ENCODE measurements at regions of chr16 and their contacts with region 1.

Region 1: DNA sequence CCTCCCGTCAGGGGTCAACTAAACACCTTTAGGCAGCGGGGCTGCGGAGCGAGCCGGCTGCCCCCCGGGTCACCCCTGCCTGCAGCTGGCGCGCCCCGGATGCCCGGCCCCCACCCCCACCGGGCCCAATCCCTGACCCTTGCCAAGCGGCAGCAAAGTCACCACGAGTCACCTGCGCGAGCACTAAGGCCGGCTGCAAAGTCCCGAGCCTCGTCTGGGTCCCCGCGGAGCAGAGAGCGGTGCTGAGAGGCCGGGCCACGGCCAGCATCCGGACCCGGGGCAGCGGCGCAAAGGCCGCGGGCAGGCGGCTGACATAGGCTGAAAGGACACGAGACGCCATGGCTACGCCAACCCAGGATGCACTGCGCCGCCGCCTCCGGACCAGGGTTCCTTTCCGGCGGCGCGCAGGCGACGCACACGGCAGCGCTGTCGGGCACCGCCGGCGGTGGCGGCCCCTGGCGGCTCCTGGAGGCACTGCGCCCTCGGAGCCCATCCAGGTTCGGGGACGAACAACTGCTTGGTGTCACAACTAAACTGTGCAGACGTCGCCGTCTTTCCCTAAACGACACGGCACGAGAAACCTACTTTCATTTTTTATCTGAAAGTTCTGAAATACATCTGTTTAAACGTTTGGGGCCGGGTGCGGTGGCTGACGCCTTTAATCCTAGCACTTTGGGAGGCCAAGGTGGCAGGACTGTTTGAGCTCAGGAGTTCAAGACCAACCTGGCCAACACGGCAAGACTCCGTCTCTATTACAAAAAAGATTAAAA is at the start of gene NDUFAB1:
- DNase-seq: peak; percentile 94 to 96
- ATAC-seq: peak; percentile 96 to 99 (median 96)
- H3K4me3 ChIP-seq: peak within 1 kb of the TSS; percentile 90
- H3K27ac ChIP-seq: peak within 1 kb of the TSS; percentile 82
- H3K4me1 ChIP-seq: peaks cover 19% of the 10 kb centered on the region
- H3K27me3 ChIP-seq: no peaks in the 10 kb centered on the region
- CTCF ChIP-seq: peak; percentile 100
- total RNA-seq, gene NDUFAB1: 175 to 241 (median 210) TPM

Region 2: GRCh38 chr16:23482778-23483177 is 113.4 kb before region 1 on chr16:
- intact Hi-C with region 1: no loop called
- DNase-seq: no peak
- ATAC-seq: no peak
- H3K4me3 ChIP-seq: no peak overlapping the region
- H3K27ac ChIP-seq: no peak overlapping the region
- H3K4me1 ChIP-seq: no peaks in the 10 kb centered on the region
- H3K27me3 ChIP-seq: no peaks in the 10 kb centered on the region
- CTCF ChIP-seq: no peak

Region 3: GRCh38 chr16:23640931-23641765 is 45.0 kb after region 1 on chr16 and contains the starts of genes DCTN5 and PALB2:
- intact Hi-C with region 1: loop called in 1 of 2 experiments (anchors 2 kb)
- DNase-seq: peak; percentile 94 to 97
- ATAC-seq: peak; percentile 99 to 100 (median 100)
- H3K4me3 ChIP-seq: peak within 1 kb of the TSS; percentile 94
- H3K27ac ChIP-seq: peak within 1 kb of the TSS; percentile 91
- H3K4me1 ChIP-seq: peaks cover 20% of the 10 kb centered on the region
- H3K27me3 ChIP-seq: no peaks in the 10 kb centered on the region
- CTCF ChIP-seq: no peak
- total RNA-seq, gene DCTN5: 27.5 to 43.8 (median 31.6) TPM
- total RNA-seq, gene PALB2: 4.3 to 6.6 (median 5.4) TPM

Region 4: DNA sequence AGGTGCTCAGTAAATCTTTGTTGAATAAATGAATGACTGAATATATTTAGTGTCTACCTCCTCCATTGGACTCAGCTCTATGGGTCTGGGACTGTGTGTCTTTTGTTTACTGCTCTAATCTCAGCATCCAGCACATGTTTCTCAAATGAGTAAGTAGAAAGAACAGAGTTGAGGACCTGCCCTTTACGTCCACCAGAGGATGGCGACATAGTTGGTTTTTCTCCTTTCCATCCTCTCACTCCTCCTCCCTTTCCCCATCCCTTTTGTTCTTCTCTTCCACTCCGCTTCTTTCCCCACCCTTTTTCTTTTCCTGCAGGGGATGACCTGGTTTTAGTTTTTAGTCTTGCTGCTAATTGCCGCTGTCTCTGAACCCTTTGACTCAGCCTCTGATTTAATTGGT is 146.6 kb after region 1 on chr16:
- intact Hi-C with region 1: no loop called
- DNase-seq: no peak
- ATAC-seq: no peak
- H3K4me3 ChIP-seq: no peak overlapping the region
- H3K27ac ChIP-seq: no peak overlapping the region
- H3K4me1 ChIP-seq: no peaks in the 10 kb centered on the region
- H3K27me3 ChIP-seq: peaks cover 0 to 1% (median 0%) of the 10 kb centered on the region in 3 donors
- CTCF ChIP-seq: no peak